ENCODE measurements at regions of chr16 and their contacts with region 1.

Region 1: DNA sequence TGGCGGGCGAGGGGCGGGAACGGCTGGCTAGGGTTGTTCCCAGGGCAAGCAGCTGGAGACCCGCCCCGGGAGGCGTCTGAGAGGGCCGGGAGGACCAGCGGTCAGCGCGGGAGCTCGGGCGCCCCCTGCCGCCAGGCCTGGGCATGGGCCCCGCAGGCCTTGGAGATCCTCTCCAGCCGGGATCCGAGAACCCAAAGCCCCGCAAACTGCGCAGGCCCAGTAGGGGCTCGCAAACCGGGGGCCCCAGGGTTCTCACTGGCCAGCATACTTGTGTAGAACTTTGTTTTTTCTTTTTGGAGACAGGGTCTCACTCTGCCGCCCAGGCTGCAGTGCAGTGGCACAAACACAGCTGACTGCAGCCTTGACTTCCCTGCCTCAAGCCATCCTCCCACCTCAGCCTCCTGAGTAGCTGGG is 20.8 kb upstream of the ZNF423 start:
- DNase-seq: peak; percentile 91

Region 2: DNA sequence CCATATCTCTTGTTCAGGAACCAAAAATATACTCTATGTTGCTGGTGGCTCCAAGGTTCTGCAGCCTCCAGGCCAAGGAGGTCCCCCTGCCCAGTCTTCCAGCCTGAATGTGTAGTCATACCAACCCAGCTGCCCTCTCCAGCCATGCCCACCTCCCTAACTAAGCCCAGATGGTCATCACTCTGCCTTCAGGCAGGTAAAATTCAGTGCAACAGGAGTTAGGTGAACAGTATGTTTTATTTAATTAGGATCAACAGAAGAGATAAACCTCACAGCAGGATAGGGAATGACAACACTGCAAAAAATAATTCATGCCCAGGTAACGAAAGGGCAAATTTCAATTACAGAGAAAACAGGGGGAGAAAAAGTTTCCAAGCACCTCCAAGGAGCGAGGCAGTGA is 29.9 kb before region 1 on chr16:
- intact Hi-C with region 1: loop called in 1 of 2 experiments (anchors 1 kb)
- DNase-seq: no peak

Region 3: GRCh38 chr16:49921791-49922456 is 45.2 kb after region 1 on chr16:
- intact Hi-C with region 1: no loop called
- DNase-seq: peak; percentile 84

Measured in posterior vena cava (tissue), 2 donors.